ENCODE measurements at regions of chr1 and their contacts with region 1.

Region 1: GRCh38 chr1:31335007-31335406 is 37.9 kb downstream of the FABP3 start:
- DNase-seq: peak; percentile 37
- H3K4me3 ChIP-seq: no peak overlapping the region
- H3K27ac ChIP-seq: no peak overlapping the region
- H3K4me1 ChIP-seq: no peaks in the 10 kb centered on the region
- H3K27me3 ChIP-seq: no peaks in the 10 kb centered on the region
- CTCF ChIP-seq: peak; percentile 50 to 72

Region 2: DNA sequence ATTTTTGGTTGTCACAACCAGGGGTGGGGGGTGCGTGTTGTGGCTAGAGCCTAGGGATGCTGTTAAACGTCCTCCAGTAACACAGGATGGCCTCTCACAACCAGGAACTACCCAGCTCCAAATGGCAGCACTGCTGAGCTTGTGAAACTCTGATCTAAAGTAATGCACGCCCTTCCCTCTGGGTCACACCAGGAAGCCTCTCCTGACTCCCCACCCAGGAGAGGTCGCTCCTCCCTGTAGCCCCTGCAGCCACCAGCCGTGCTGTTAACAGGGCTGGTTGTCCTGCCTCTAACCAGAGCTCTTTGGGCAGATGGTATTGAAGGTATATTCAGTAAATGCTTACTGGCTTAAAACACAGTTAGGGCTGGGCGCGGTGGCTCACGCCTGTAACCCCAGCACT is 168.5 kb before region 1 on chr1:
- CTCF ChIA-PET with region 1: no interaction called
- dilution Hi-C with region 1: no loop called
- in situ Hi-C with region 1: no loop called
- intact Hi-C with region 1: loop called (anchors 1 kb)
- DNase-seq: no peak
- H3K4me3 ChIP-seq: no peak overlapping the region
- H3K27ac ChIP-seq: no peak overlapping the region
- H3K4me1 ChIP-seq: peaks cover 18% of the 10 kb centered on the region
- H3K27me3 ChIP-seq: no peaks in the 10 kb centered on the region
- CTCF ChIP-seq: no peak

Region 3: DNA sequence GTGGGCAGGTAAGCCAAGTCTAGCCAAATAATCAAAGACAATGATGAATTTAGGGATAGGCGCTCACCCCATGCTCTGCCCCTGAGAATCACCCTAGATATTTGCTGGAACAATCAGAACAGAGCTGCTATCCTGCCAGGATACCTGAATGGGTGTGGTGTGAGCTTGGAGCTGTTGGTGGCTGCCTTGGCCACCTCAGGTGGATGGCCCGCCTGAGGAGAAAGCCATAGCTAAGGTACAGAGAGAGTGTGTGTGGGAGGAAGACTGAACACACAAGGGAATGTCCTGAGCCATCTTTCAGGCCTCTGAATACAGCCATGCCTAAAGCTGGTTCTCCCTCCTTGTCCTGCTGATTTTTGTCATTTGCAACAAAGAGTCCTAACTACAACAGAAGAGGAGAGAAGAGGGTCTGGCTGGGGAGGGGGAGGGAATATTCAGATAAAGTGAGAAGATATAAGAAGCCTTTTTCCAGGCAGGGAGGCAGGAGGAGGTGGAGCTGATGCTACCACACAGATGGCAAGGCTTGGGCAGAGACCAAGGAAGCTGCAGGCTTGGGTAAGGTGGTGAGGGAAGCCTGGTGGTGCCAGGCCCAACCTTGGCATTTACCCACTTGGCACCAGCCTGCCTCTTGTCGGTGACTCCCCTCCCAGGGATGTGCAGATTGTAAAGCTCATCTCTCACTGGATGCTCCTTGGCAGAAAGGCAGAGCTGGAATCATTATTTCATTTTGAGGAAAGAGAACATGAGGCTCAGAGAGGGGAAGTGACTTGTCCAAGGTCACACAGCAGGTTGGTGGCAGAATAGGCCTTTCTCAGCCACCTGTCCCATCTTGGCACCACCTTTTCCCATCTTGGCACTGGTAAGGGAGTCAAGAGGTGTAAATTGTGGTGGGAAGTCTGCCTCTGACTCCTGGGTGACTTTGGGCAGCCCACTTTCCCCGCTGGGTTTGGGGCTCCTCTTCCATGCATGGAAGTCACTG is 145.0 kb before region 1 on chr1:
- CTCF ChIA-PET with region 1: no interaction called
- dilution Hi-C with region 1: no loop called
- in situ Hi-C with region 1: loop called (anchors 5 to 10 kb)
- intact Hi-C with region 1: loop called (anchors 1 kb)
- DNase-seq: no peak
- H3K4me3 ChIP-seq: no peak overlapping the region
- H3K27ac ChIP-seq: no peak overlapping the region
- H3K4me1 ChIP-seq: no peaks in the 10 kb centered on the region
- H3K27me3 ChIP-seq: no peaks in the 10 kb centered on the region
- CTCF ChIP-seq: no peak

Region 4: DNA sequence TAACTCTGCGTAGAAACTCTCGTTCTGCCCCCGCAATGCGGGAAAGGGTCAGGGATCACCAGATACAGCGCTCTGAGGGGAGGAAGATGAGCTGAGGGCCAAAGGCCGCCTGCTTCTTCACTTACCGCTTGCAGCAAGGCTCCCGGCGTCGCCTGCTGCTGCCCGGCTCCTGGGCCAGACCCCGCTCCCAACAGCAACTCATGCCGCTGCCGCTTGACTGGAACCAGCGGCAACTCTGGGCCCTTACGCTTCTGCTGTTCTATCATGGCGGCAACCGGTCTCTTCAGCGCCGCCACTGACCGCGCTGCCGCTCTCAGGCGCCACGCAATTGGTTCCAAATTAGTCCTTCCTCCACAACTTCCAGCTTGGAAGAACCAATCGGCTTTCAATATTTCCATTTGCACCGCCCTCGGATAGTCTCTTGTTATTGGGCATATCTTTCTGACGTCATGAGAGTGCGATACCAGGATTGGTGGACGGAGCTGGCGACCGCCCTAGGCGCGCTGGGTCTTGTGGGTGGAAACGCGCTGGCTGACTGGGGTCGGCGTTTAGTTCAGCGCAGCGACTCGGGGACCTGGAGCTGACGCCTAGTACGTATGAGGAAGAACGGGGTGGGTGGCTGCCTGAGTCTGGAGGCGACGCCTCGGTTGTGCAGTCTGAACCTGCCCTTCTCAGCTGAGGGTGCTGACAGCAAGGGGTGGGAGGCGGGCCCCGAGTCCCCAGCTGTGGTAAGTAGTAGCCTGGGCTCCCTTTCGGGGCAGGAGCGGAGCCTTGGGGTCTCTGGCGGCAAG is 38.3 kb before region 1 on chr1 and contains the starts of genes SNRNP40 and ZCCHC17:
- CTCF ChIA-PET with region 1: no interaction called
- dilution Hi-C with region 1: no loop called
- in situ Hi-C with region 1: no loop called
- intact Hi-C with region 1: loop called (anchors 2 kb)
- DNase-seq: peak; percentile 100
- H3K4me3 ChIP-seq: peak within 1 kb of the TSS; percentile 82 to 96 (median 88)
- H3K27ac ChIP-seq: peak within 1 kb of the TSS; percentile 82
- H3K4me1 ChIP-seq: peaks cover 13% of the 10 kb centered on the region
- H3K27me3 ChIP-seq: no peaks in the 10 kb centered on the region
- CTCF ChIP-seq: peak in 1 of 2 donors; percentile 9
- total RNA-seq, gene SNRNP40: 50.9 to 69.8 TPM
- total RNA-seq, gene ZCCHC17: 47.5 to 49.7 TPM